Activated naive CD4-positive, alpha-beta T cell treated with anti-CD3 and anti-CD28 coated beads for 36 hours (primary cell): ENCODE measurements at regions of chrX and their contacts with region 1.

Region 1: DNA sequence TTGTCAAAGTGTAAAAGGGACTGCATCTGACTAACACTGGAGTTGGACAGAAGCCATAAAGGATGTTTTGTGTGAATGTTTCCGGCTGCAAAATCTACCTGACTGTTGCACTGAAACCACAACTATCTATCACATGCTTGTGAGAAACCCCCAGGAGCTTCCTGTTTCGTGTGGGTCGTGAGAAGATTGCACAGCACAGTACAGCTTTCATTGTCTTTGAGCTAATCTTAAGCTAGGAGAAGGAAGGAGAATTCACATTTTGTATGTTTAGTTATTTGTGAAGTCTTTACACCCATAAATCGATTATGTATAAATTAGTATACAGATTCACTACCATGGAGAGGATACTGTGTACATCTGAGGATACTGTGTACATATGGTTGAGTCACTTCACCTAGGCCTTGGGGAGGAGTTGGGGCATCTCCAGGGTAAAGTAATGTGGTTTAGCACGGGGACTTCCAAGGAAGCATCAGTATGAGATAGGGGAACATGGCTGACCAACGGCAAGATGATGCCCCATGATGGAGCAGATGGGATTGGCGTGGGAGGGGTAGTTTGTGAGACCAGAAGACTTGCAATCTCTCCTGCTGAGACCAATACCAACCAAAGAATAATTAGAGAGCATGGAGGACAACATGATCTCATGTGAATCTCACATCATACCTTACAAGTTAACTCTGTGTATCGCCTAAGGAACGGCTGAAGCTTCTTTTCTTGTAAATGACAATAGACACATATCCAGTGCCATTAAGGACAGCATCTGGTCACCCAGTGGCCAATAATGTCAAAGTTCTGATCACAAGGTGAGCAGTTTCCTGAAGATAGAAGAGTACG is 43.1 kb upstream of the FAM9C start:
- DNase-seq: peak; percentile 74
- H3K4me3 Mint-ChIP-seq: peak overlapping the region; percentile 79
- H3K27ac Mint-ChIP-seq: peak overlapping the region; percentile 97
- H3K4me1 Mint-ChIP-seq: peaks cover 87% of the 10 kb centered on the region
- H3K27me3 Mint-ChIP-seq: no peaks in the 10 kb centered on the region

Region 2: GRCh38 chrX:12974796-12975669 is 112.5 kb before region 1 on chrX and contains the start of gene TMSB4X:
- CTCF ChIA-PET with region 1: interaction called, 28 read pairs
- intact Hi-C with region 1: loop called (anchors 1 kb)
- DNase-seq: peak; percentile 84
- H3K4me3 Mint-ChIP-seq: peak within 1 kb of the TSS; percentile 82
- H3K27ac Mint-ChIP-seq: peak within 1 kb of the TSS; percentile 96
- H3K4me1 Mint-ChIP-seq: peaks cover 18% of the 10 kb centered on the region
- H3K27me3 Mint-ChIP-seq: no peaks in the 10 kb centered on the region
- total RNA-seq, gene TMSB4X: 5,535 to 5,691 TPM

Region 3: DNA sequence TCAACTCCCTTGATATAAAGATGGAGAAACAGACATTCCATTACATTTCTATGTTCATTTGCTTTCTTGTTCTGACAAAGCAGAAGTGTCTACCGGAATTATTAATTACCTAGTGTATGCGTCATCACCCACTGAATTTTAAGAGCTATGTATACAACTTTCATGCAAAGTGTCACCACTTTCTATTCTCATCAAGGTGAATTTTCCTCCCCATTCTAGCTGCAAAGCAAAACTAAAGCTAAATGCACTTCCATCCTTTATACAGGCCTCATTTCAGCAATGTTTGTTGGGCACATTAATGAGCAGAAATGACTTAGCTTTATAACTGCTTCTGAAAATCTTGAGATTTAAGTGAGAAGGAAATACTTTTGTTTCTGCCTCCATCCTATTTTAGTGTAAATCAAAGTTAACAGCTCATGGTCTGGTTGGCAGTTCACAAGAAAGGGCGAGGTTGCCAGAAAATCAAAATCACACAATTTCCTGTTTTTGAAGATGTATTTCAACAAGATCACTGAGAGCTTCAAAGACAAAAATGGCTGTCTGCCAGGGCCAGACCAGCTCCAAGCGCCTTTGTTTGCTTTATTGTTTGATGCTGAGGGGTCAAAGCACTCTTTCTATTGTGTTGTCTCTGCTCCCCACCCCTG is 35.9 kb before region 1 on chrX:
- CTCF ChIA-PET with region 1: interaction called, 11 read pairs
- intact Hi-C with region 1: loop called (anchors 1 kb)
- DNase-seq: peak; percentile 43
- H3K4me3 Mint-ChIP-seq: peak overlapping the region; percentile 36
- H3K27ac Mint-ChIP-seq: peak overlapping the region; percentile 95
- H3K4me1 Mint-ChIP-seq: peaks cover 77% of the 10 kb centered on the region
- H3K27me3 Mint-ChIP-seq: no peaks in the 10 kb centered on the region

Region 4: GRCh38 chrX:13257223-13258051 is 169.9 kb after region 1 on chrX:
- CTCF ChIA-PET with region 1: no interaction called
- intact Hi-C with region 1: loop called (anchors 2 kb)
- DNase-seq: peak; percentile 17
- H3K4me3 Mint-ChIP-seq: no peak overlapping the region
- H3K27ac Mint-ChIP-seq: no peak overlapping the region
- H3K4me1 Mint-ChIP-seq: peaks cover 29% of the 10 kb centered on the region
- H3K27me3 Mint-ChIP-seq: no peaks in the 10 kb centered on the region

Region 5: DNA sequence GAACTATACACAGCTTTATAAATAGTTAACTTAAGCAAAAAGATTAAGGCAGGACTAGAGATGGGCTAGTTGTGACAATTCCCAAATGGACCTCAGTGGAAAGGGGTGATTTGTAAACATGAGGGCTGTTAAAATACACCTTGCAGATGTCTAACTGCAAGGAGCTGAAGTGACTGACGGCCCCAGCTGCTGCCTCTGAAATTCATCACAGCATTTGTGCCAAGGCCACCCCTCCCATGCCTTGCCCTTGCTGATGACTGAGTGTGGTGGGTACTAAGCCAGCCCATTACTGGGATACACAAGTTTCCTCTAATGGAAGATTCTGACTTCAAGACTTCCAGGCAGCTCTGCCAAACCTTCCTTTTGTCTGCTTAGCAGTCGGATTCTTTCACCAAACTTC is 458.2 kb after region 1 on chrX:
- CTCF ChIA-PET with region 1: no interaction called
- intact Hi-C with region 1: loop called (anchors 5 kb)
- DNase-seq: no peak
- H3K4me3 Mint-ChIP-seq: no peak overlapping the region
- H3K27ac Mint-ChIP-seq: no peak overlapping the region
- H3K4me1 Mint-ChIP-seq: peaks cover 13% of the 10 kb centered on the region
- H3K27me3 Mint-ChIP-seq: peaks cover 2% of the 10 kb centered on the region

Region 6: DNA sequence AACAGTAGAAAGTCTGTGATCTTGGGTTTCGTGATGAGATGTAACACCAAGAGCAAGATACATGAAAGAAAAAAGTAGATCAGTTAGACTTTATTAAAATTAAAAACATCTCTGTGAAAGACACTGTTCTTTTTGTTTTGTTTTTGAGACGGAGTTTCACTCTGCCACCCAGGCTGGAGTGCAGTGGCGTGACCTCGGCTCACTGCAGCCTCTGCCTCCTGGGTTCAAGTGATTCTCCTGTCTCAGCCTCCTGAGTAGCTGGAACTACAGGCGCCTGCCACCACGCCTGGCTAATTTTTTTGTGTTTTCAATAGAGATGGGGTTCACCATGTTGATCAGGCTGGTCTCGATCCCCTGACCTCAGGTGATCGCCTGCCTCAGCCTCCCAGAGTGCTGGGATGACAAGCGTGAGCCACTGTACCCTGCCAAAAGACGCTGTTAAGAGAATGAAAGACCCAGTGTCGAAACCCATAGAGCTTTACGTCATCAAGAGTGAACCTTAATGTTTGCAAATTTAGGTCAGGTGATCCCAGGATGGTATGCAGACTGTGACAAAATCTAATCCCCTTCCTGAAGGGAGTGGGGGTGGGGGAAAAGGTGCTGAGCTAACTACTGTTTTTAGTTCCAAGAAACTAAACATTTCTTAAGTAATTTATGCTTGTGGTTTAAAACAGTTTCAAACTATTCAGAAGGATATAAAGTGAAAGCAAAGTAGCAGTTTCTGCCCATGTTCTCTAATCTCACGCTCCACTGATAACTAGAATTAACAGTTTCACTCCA is 655.0 kb after region 1 on chrX:
- CTCF ChIA-PET with region 1: no interaction called
- intact Hi-C with region 1: loop called (anchors 5 kb)
- DNase-seq: peak; percentile 75
- H3K4me3 Mint-ChIP-seq: peak overlapping the region; percentile 58
- H3K27ac Mint-ChIP-seq: peak overlapping the region; percentile 85
- H3K4me1 Mint-ChIP-seq: peaks cover 31% of the 10 kb centered on the region
- H3K27me3 Mint-ChIP-seq: no peaks in the 10 kb centered on the region